ENCODE measurements at regions of chr20 and their contacts with region 1.

Region 1: GRCh38 chr20:4180356-4180755 is 165.0 kb upstream of the RNF24 start:
- DNase-seq: no peak
- ATAC-seq: no peak
- H3K4me3 ChIP-seq: no peak overlapping the region
- H3K27ac ChIP-seq: peak overlapping the region in 1 of 2 experiments; percentile 40; a peak in 3 of 6 replicates
- H3K4me1 ChIP-seq: no peaks in the 10 kb centered on the region; the same call in 2 of the 3 replicates
- CTCF ChIP-seq: no peak
- EP300 ChIP-seq: no peak
- POLR2A ChIP-seq: no peak
- RAD21 ChIP-seq: no peak

Region 2: GRCh38 chr20:4195499-4195898 is 15.1 kb after region 1 on chr20:
- CTCF ChIA-PET with region 1: interaction called, 17 read pairs
- POLR2A ChIA-PET with region 1: no interaction called
- DNase-seq: peak; percentile 52 to 61
- ATAC-seq: peak; percentile 14 to 24; a peak in 3 of 6 replicates
- H3K4me3 ChIP-seq: no peak overlapping the region
- H3K27ac ChIP-seq: peak overlapping the region; percentile 48 to 88
- H3K4me1 ChIP-seq: peaks cover 55% of the 10 kb centered on the region
- CTCF ChIP-seq: peak; percentile 80
- EP300 ChIP-seq: no peak
- POLR2A ChIP-seq: no peak
- RAD21 ChIP-seq: peak; percentile 89 to 90

Region 3: GRCh38 chr20:4272225-4272624 is 91.9 kb after region 1 on chr20:
- CTCF ChIA-PET with region 1: no interaction called
- POLR2A ChIA-PET with region 1: no interaction called
- DNase-seq: no peak
- ATAC-seq: no peak
- H3K4me3 ChIP-seq: no peak overlapping the region
- H3K27ac ChIP-seq: no peak overlapping the region
- H3K4me1 ChIP-seq: no peaks in the 10 kb centered on the region
- CTCF ChIP-seq: no peak
- EP300 ChIP-seq: no peak
- POLR2A ChIP-seq: no peak
- RAD21 ChIP-seq: no peak

Measured in A549 (cell line).